Caco-2 (cell line): ENCODE measurements at regions of chrX and their contacts with region 1.

Region 1: GRCh38 chrX:49812177-49812576 is 16.9 kb upstream of the PAGE4 start:
- DNase-seq: peak; percentile 46 to 61
- H3K4me3 ChIP-seq: no peak overlapping the region
- H3K4me3 Mint-ChIP-seq: peak overlapping the region; percentile 8
- H3K27ac Mint-ChIP-seq: peak overlapping the region; percentile 92
- H3K4me1 ChIP-seq: peaks cover 24% of the 10 kb centered on the region
- H3K4me1 Mint-ChIP-seq: no peaks in the 10 kb centered on the region
- H3K27me3 ChIP-seq: no peaks in the 10 kb centered on the region
- H3K27me3 Mint-ChIP-seq: no peaks in the 10 kb centered on the region
- CTCF ChIP-seq: no peak

Region 2: GRCh38 chrX:49860867-49861495 is 48.8 kb after region 1 on chrX:
- CTCF ChIA-PET with region 1: no interaction called
- POLR2A ChIA-PET with region 1: no interaction called
- intact Hi-C with region 1: loop called (anchors 1 kb)
- DNase-seq: peak; percentile 54 to 79
- H3K4me3 ChIP-seq: no peak overlapping the region
- H3K4me3 Mint-ChIP-seq: peak overlapping the region; percentile 26
- H3K27ac Mint-ChIP-seq: peak overlapping the region; percentile 62
- H3K4me1 ChIP-seq: peaks cover 40% of the 10 kb centered on the region
- H3K4me1 Mint-ChIP-seq: peaks cover 31% of the 10 kb centered on the region
- H3K27me3 ChIP-seq: no peaks in the 10 kb centered on the region
- H3K27me3 Mint-ChIP-seq: no peaks in the 10 kb centered on the region
- CTCF ChIP-seq: no peak